Activated CD4-positive, alpha-beta T cell treated with anti-CD3 and anti-CD28 coated beads, Interleukin-2, amount 10 ng/mL, durations not matched to agents 24 days and 14 days (primary cell): ENCODE measurements at regions of chr18 and their contacts with region 1.

Region 1: GRCh38 chr18:34834897-34835296 is 124.8 kb downstream of the DTNA start:
- DNase-seq: no peak
- H3K4me3 Mint-ChIP-seq: no peak overlapping the region
- H3K27ac Mint-ChIP-seq: peak overlapping the region; percentile 57
- H3K4me1 Mint-ChIP-seq: peaks cover 8% of the 10 kb centered on the region
- H3K27me3 Mint-ChIP-seq: no peaks in the 10 kb centered on the region

Region 2: DNA sequence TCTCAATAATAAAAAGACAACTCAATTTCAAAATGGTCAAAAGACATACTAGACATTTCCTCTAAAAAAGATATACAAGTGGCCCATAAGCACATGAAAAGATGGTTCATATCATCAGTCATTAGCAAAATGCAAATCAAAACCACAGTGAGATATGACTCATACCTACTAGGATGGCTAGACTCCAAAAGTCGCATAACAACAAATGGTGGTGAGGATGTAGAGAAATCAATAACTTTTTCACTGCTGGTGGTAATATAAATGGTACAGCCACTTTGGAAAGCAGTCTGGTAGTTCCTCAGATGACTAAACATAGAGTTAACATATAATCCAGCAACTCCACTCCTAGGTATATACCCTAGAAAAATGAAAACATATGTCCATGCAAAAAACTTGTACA is 367.8 kb before region 1 on chr18:
- intact Hi-C with region 1: no loop called
- DNase-seq: no peak
- H3K4me3 Mint-ChIP-seq: no peak overlapping the region
- H3K27ac Mint-ChIP-seq: no peak overlapping the region
- H3K4me1 Mint-ChIP-seq: no peaks in the 10 kb centered on the region
- H3K27me3 Mint-ChIP-seq: no peaks in the 10 kb centered on the region

Region 3: DNA sequence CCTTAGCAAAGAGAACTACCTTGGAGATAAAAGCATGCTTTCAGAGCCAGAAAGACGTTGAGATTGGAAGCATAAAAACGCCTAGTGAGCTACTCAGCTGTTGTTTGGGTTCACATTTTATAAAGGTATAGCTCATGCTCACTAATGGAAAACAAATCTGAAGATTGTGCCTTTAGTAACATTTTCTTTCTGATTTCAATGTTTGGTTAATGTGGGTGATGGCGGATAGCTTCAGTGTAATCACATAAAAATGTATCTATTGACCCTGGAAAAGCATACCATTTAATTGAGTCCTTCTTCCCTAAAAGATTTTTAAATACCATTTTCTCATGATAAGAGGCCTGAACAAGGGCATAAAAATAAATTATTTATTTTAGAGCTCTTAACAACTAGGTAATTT is 51.4 kb before region 1 on chr18:
- intact Hi-C with region 1: no loop called
- DNase-seq: no peak
- H3K4me3 Mint-ChIP-seq: no peak overlapping the region
- H3K27ac Mint-ChIP-seq: no peak overlapping the region
- H3K4me1 Mint-ChIP-seq: peaks cover 3% of the 10 kb centered on the region
- H3K27me3 Mint-ChIP-seq: peaks cover 8% of the 10 kb centered on the region

Region 4: DNA sequence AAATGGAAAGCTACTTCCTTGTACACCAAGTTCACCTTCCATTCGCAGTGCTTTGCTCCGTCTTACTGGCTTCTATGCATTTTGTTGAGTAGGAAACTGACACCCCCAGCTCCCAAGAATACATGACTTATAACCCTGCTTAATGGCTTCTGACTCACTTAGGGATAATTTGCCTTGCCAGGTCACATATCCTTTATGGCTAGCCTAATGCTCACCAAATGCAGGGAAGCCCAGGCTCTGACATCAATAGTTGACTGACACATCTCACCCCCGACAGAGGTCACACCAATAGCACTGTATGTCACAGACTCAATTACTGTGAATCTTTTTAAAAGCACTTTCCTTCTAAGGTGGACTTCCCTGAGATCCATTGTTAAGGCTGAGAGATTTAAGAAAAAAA is 22.4 kb after region 1 on chr18:
- intact Hi-C with region 1: loop called (anchors 1 kb)
- DNase-seq: no peak
- H3K4me3 Mint-ChIP-seq: no peak overlapping the region
- H3K27ac Mint-ChIP-seq: no peak overlapping the region
- H3K4me1 Mint-ChIP-seq: peaks cover 7% of the 10 kb centered on the region
- H3K27me3 Mint-ChIP-seq: peaks cover 32% of the 10 kb centered on the region

Region 5: DNA sequence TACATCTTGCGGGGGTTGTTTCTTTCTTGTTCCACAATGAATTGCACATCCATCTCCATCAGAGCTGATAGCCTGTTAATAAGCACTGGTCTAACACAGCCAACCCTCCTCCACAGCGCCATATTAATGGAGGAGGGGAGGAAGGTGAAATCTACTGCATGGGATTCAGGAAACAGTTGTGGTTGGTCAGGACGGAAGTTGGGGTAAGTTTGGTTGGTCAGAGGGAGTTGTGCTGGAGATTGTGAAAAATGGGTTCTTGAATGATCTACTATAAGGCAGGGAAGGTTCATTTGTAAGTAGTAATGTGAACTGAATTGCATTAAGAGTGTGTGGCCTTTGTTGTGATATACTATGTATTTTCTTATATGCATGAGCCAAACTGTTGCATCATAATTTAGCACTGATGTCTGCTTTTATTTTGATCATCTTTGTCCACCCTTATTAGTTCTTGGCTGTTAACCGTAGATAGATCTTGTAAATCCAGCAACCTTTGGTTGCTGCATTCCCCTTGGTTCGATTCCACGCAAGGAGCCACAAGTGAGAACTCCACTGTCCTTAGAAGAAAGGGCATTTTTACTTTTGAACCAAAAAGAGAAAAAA is 55.7 kb after region 1 on chr18:
- intact Hi-C with region 1: no loop called
- DNase-seq: no peak
- H3K4me3 Mint-ChIP-seq: no peak overlapping the region
- H3K27ac Mint-ChIP-seq: no peak overlapping the region
- H3K4me1 Mint-ChIP-seq: peaks cover 2% of the 10 kb centered on the region
- H3K27me3 Mint-ChIP-seq: no peaks in the 10 kb centered on the region

Region 6: DNA sequence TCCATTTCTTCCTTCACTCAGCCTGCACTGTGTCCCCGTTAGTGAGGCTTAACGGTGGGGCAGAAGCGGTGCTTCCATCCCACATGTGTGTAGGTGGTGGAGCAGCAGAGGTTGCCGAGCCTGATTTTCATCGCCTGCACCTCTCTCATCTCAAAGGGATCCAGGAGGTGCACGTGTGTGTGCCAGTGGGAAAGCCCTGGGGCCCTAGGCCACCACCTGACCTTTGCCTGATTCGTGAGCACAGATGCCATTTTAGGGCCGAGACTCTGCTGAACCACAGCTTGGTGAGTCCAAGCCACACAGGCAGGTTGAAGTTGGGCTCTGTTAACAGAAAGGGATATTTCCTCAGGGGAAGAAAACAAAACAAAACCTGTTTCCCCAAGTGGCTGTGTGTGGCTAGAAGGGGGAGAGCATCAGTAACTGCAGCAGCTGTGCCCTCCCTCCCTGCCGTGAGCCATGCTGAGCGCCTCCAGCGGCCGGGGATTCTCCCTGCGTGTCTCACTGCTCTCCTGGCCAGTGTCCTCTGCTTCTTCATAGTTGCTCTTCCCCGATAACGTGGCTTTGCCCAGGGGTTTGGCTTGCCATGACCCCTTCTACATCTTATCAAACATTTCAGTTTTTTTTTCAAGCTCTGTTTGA is 287.8 kb after region 1 on chr18:
- intact Hi-C with region 1: no loop called
- DNase-seq: peak; percentile 65
- H3K4me3 Mint-ChIP-seq: no peak overlapping the region
- H3K27ac Mint-ChIP-seq: peak overlapping the region; percentile 30
- H3K4me1 Mint-ChIP-seq: peaks cover 9% of the 10 kb centered on the region
- H3K27me3 Mint-ChIP-seq: no peaks in the 10 kb centered on the region